Sciatic nerve (tissue), 2 donors: ENCODE measurements at regions of chr7 and their contacts with region 1.

Region 1: DNA sequence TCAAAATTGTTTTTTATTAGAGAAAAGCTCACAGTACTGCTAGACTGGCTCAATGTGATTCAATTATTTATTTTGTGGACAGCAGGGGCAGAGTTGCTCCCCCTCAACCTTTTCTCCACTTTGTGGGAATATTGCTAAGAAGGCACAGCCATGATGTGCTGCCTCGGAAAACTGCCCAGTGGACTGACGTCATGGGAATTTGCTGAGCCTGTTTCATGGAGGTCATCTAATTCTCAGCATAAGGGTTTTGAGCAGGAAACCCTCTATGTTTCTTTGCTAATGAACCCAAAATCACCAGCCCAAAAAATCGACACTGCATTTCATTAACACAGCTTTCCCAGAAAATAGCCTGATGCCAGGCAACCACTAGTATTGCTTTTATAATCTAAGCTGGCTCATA is 228.8 kb upstream of the FAM3C start:
- DNase-seq: peak; percentile 57
- ATAC-seq: peak; percentile 55

Region 2: DNA sequence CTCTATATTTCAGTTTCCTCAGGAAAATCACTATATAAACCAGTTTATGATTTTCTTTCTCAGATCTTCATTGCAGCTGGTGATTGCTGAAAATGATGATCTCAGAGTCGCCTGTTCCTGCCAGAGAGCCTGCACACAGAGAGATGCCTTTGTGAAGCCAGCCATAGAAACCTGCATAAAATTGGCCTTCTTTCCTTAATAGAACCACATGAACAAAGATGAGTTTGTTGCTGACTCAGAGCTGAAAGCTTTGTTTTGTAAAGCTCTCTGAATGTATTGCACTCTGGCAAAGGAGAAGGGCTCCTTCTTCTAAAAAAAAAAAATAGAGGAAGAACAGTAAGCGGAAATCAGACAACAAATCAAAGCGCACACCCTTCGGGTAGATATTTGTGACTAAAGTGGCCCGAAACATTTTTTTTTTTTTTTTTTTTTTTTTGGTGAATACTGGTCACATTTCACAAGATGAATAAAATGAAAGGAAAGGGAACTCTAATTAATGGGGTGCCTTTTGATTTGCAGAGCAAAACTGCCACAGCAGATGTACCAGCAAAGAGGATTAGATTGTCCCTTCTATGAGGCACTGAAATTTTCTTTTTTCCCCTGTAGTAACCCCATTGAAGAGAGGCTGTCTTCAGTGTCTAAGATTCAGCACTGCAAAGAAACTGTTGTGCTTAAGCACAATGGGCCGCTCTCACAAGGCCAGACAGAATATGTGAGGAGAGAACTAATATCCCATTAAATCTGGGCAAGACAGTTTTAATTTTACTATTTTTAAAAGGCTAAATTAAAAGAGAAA is 172.9 kb after region 1 on chr7:
- intact Hi-C with region 1: loop called (anchors 5 kb)
- DNase-seq: no peak
- ATAC-seq: peak; percentile 89